Endothelial cell of umbilical vein (primary cell): ENCODE measurements at regions of chr5 and their contacts with region 1.

Region 1: DNA sequence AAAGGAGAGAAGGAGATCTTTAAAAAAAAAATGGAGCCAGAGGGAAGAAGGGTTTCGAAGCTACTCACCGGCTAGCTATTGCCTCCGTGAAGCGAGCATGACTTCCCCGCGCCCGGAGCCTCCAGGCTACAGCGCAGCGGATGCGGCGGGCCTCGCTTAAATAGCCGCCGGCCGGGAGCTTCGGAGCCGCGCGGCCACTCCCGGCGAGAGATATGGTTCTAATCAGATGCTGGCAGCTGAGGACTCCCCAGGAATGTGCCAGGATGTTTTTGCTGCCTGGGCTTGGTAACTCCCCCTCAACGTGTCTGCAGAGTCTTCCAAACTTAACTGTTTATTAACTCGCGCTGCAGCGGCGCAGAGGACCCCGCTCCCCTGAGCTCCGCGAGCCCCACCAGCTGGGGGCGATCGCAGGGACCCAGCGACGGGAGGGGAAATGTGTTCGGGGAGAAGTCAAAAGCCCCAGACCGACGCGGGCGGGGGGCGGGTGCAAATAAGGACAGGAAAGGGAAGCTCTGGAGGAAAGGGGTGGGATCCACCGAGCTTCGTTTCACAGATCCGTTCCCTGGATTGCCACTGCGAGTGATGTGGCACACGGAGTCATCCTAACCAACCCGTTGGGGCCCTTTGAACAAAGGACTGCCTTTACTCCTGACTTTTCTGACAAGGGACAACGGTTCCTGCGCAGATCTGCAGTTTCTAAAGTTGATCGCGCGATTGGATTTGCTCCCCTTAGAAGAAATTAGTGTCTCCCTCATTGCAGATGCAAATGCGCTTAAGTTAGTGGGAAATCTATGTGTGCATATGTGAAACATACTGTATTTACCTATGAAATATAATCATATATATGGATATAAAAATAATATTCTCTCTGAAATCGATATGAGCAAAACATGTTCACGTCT is at the start of gene DAB2:
- DNase-seq: peak; percentile 99
- H3K4me3 ChIP-seq: peak within 1 kb of the TSS; percentile 56 to 100 (median 99)
- H3K27ac ChIP-seq: peak within 1 kb of the TSS; percentile 91
- H3K4me1 ChIP-seq: peaks cover 61% of the 10 kb centered on the region
- H3K27me3 ChIP-seq: no peaks in the 10 kb centered on the region
- CTCF ChIP-seq: peak; percentile 87 to 88
- POLR2A ChIP-seq: peak; percentile 36
- total RNA-seq, gene DAB2: 245 and 283 TPM in 2 replicates

Region 2: GRCh38 chr5:39074016-39074886 is 350.7 kb before region 1 on chr5 and contains the start of gene RICTOR:
- CTCF ChIA-PET with region 1: no interaction called
- POLR2A ChIA-PET with region 1: no interaction called
- dilution Hi-C with region 1: no loop called
- intact Hi-C with region 1: loop called (anchors 10 kb)
- DNase-seq: peak; percentile 91
- H3K4me3 ChIP-seq: peak within 1 kb of the TSS; percentile 89 to 99 (median 92)
- H3K27ac ChIP-seq: peak within 1 kb of the TSS; percentile 90
- H3K4me1 ChIP-seq: peaks cover 35% of the 10 kb centered on the region
- H3K27me3 ChIP-seq: no peaks in the 10 kb centered on the region
- CTCF ChIP-seq: no peak
- POLR2A ChIP-seq: peak; percentile 83
- total RNA-seq, gene RICTOR: 38.0 and 39.5 TPM in 2 replicates

Region 3: DNA sequence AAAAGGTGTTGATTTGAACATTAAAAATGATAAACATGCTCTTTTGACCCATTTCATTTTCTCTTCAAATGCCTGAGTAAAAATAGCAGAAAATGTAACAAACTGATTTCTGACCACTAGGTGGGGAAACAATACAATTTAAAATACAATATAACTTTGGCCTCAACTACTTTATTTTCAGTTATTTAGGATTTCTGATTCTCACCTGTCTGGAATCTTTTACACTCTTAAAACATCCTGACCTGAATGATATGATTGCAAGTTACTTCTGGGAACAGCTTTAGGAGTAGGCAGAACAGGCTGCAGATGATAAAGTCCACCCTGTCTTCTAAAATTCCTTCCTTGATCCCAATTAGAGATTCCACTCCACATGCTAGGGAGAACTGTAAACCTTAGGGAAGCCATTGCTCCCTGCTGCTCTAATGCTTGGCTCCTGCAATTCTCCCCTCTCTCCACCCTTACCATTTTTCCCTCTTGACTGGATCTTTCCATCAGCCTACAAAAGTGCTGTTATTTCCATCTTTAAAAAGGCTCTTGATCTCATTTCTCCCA is 275.9 kb before region 1 on chr5:
- CTCF ChIA-PET with region 1: no interaction called
- POLR2A ChIA-PET with region 1: no interaction called
- dilution Hi-C with region 1: no loop called
- intact Hi-C with region 1: no loop called
- DNase-seq: peak; percentile 77
- H3K4me3 ChIP-seq: no peak overlapping the region
- H3K27ac ChIP-seq: peak overlapping the region; percentile 88
- H3K4me1 ChIP-seq: peaks cover 10% of the 10 kb centered on the region
- H3K27me3 ChIP-seq: no peaks in the 10 kb centered on the region
- CTCF ChIP-seq: peak; percentile 5 to 22
- POLR2A ChIP-seq: no peak

Region 4: DNA sequence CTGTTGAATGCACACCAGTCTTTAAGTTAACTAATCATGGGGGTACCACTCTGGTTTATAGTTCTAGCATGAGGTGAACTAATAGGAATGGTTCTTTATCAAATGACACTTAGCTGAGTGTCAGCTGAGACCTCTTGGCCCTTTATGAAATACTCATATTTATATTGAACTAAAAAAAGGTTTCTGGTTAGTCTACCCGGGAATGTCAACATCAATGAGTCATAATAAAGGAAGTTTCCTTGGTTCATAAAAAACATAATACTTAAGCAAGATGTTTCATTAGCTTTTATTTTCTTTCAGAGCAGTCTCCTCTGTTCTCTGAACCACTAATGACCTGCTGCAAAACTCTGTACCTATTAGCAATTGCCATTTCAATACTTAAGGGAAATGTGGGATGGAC is 13.9 kb before region 1 on chr5:
- CTCF ChIA-PET with region 1: interaction called, 16 read pairs
- POLR2A ChIA-PET with region 1: interaction called, 40 read pairs
- dilution Hi-C with region 1: no loop called
- intact Hi-C with region 1: loop called (anchors 1 kb)
- DNase-seq: peak; percentile 89
- H3K4me3 ChIP-seq: peak overlapping the region in 1 of 3 experiments; percentile 23
- H3K27ac ChIP-seq: peak overlapping the region; percentile 47
- H3K4me1 ChIP-seq: peaks cover 43% of the 10 kb centered on the region
- H3K27me3 ChIP-seq: no peaks in the 10 kb centered on the region
- CTCF ChIP-seq: no peak
- POLR2A ChIP-seq: no peak

Region 5: DNA sequence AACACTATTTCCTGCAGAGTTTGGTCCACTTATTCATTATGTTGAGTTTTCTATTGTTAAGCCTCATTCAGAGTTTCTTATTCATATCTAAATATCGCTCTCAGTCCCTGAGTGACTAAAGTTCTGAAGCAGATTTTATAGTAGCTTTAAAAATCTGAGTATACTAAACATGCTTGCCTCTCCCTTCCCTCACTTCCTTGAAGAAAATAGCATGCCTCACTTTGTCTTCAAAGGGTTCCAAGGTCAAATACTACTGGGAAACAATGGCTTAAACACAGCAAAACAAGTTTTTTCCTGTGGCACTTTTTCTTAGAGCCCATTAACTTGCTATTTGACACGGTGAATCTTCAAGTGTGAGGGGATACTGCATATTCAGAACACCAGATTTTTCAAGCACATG is 40.9 kb after region 1 on chr5:
- CTCF ChIA-PET with region 1: interaction called, 4 read pairs
- POLR2A ChIA-PET with region 1: interaction called, 13 read pairs
- dilution Hi-C with region 1: no loop called
- intact Hi-C with region 1: no loop called
- DNase-seq: peak; percentile 76
- H3K4me3 ChIP-seq: no peak overlapping the region
- H3K27ac ChIP-seq: peak overlapping the region; percentile 31
- H3K4me1 ChIP-seq: peaks cover 15% of the 10 kb centered on the region
- H3K27me3 ChIP-seq: no peaks in the 10 kb centered on the region
- CTCF ChIP-seq: no peak
- POLR2A ChIP-seq: no peak

Region 6: DNA sequence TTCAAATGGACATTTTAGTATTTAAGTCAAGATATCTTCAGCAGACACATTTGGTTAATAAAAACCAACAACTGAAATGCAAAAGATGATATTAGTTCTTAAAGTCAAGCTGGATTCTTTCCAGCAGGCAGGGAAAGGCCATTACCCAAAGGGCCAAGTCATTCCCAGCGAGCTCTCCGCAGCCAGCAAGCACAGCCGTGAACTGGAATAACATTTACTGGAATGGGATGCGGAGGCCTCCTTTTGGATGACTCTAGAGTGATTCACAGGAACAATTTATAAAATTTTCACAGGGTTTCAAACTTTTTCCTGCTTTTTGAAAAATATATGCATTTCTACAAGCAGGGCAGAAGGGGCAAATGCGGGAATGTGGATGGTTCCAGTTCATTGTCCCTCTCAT is 76.4 kb after region 1 on chr5:
- CTCF ChIA-PET with region 1: interaction called, 35 read pairs
- POLR2A ChIA-PET with region 1: interaction called, 15 read pairs
- dilution Hi-C with region 1: no loop called
- intact Hi-C with region 1: no loop called
- DNase-seq: peak; percentile 83
- H3K4me3 ChIP-seq: no peak overlapping the region
- H3K27ac ChIP-seq: peak overlapping the region; percentile 64
- H3K4me1 ChIP-seq: peaks cover 26% of the 10 kb centered on the region
- H3K27me3 ChIP-seq: no peaks in the 10 kb centered on the region
- CTCF ChIP-seq: no peak
- POLR2A ChIP-seq: no peak

Region 7: DNA sequence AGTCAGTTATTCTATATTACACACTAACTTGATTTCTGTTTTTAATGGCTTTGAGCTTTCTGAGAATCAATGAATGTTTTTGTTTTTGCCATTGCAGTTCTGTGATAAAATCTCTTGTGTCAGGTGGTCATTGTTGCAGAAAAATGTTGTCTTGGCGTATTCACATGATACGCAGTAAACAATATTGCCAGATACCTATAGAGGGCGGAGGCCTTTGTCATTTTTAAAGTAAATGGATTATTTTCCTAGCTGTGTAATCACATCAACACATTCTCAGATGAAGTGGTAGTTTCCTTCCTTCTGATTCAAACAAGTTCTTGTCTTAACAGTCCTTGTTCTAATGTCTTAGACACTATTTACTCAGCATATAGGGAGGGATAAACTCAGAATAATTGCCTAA is 109.7 kb after region 1 on chr5:
- CTCF ChIA-PET with region 1: interaction called, 16 read pairs
- POLR2A ChIA-PET with region 1: interaction called, 7 read pairs
- dilution Hi-C with region 1: loop called (anchors 25 kb)
- intact Hi-C with region 1: no loop called
- DNase-seq: peak; percentile 72
- H3K4me3 ChIP-seq: no peak overlapping the region
- H3K27ac ChIP-seq: no peak overlapping the region
- H3K4me1 ChIP-seq: peaks cover 16% of the 10 kb centered on the region
- H3K27me3 ChIP-seq: no peaks in the 10 kb centered on the region
- CTCF ChIP-seq: no peak
- POLR2A ChIP-seq: no peak

Region 8: GRCh38 chr5:40688127-40688761 is 1263.3 kb after region 1 on chr5:
- CTCF ChIA-PET with region 1: no interaction called
- POLR2A ChIA-PET with region 1: interaction called, 3 read pairs
- dilution Hi-C with region 1: no loop called
- intact Hi-C with region 1: loop called (anchors 2 kb)
- DNase-seq: peak; percentile 94
- H3K4me3 ChIP-seq: peak overlapping the region in 1 of 3 experiments; percentile 14
- H3K27ac ChIP-seq: peak overlapping the region; percentile 83
- H3K4me1 ChIP-seq: peaks cover 64% of the 10 kb centered on the region
- H3K27me3 ChIP-seq: no peaks in the 10 kb centered on the region
- CTCF ChIP-seq: peak; percentile 68 to 78
- POLR2A ChIP-seq: no peak